HEK293 (cell line): ENCODE measurements at regions of chr6 and their contacts with region 1.

Region 1: DNA sequence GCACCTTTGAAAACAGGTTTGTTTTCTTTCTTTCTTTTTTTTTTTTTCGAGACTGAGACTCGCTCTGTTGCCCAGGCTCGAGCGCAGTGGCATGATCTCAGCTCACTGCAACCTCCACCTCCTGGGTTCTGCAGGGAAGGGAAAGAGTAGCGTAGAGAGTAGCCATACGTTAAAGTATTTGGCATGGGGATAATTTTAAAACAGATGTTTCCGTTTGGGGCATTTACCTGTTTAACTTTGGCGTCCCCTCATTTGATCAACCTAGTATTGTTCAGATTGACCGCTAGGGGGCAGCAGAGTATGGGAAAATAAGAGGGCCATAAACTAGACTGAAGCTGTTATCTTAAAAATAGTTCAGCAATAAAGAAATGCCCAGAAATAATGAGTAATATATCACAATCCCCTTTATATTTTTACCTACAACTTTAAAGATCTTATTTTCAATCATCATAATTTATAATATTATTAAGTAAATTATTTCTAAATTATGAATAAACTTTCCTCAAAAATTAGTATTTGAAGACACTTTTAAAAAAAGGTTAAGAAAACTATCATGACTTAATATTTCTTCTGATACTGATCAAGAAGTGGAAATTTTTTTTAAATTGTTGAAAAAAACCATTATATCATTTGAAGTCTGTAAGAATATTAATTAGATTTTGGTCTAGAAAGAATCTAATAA is 7.6 kb upstream of the TAAR9 start:
- H3K4me3 ChIP-seq: peak overlapping the region; percentile 25; the same call in 1 of the 2 replicates
- H3K27ac ChIP-seq: no peak overlapping the region
- H3K4me1 ChIP-seq: peaks cover 5% of the 10 kb centered on the region; the same call in 1 of the 2 replicates
- CTCF ChIP-seq: peak; percentile 56

Region 2: GRCh38 chr6:132357120-132357519 is 173.3 kb before region 1 on chr6:
- CTCF ChIA-PET with region 1: no interaction called
- POLR2A ChIA-PET with region 1: no interaction called
- H3K4me3 ChIP-seq: no peak overlapping the region
- H3K27ac ChIP-seq: no peak overlapping the region
- H3K4me1 ChIP-seq: 0 out of 2 replicates have a peak, but pooled peaks cover under 1% of the 10 kb centered on the region
- CTCF ChIP-seq: no peak

Region 3: GRCh38 chr6:132495604-132496079 is 34.8 kb before region 1 on chr6:
- CTCF ChIA-PET with region 1: interaction called, 13 read pairs
- POLR2A ChIA-PET with region 1: no interaction called
- H3K4me3 ChIP-seq: no peak overlapping the region
- H3K27ac ChIP-seq: no peak overlapping the region
- H3K4me1 ChIP-seq: no peaks in the 10 kb centered on the region
- CTCF ChIP-seq: no peak

Region 4: GRCh38 chr6:132512638-132513632 is 17.5 kb before region 1 on chr6 and contains the start of gene STX7:
- CTCF ChIA-PET with region 1: interaction called, 14 read pairs
- POLR2A ChIA-PET with region 1: no interaction called
- H3K4me3 ChIP-seq: peak within 1 kb of the TSS; percentile 85
- H3K27ac ChIP-seq: peak within 1 kb of the TSS; percentile 6; the same call in 1 of the 2 replicates
- H3K4me1 ChIP-seq: peaks cover 5% of the 10 kb centered on the region
- CTCF ChIP-seq: no peak

Region 5: GRCh38 chr6:132548746-132549463 is 18.5 kb after region 1 on chr6:
- CTCF ChIA-PET with region 1: interaction called, 20 read pairs
- POLR2A ChIA-PET with region 1: no interaction called
- H3K4me3 ChIP-seq: no peak overlapping the region
- H3K27ac ChIP-seq: no peak overlapping the region
- H3K4me1 ChIP-seq: no peaks in the 10 kb centered on the region
- CTCF ChIP-seq: no peak